Heart left ventricle (tissue), 16 donors: ENCODE measurements at regions of chr16 and their contacts with region 1.

Region 1: GRCh38 chr16:82263521-82264143 is 93.6 kb upstream of the MPHOSPH6 start:
- DNase-seq: peak in 4 of 5 donors; percentile 43 to 53 (median 48)
- ATAC-seq: peak; percentile 79 to 92 (median 88)
- H3K4me3 ChIP-seq: no peak overlapping the region
- H3K27ac ChIP-seq: no peak overlapping the region
- H3K4me1 ChIP-seq: peaks cover 0 to 13% (median 0%) of the 10 kb centered on the region in 12 donors
- H3K27me3 ChIP-seq: no peaks in the 10 kb centered on the region
- CTCF ChIP-seq: peak; percentile 81 to 96 (median 90)
- POLR2A ChIP-seq: no peak

Region 2: DNA sequence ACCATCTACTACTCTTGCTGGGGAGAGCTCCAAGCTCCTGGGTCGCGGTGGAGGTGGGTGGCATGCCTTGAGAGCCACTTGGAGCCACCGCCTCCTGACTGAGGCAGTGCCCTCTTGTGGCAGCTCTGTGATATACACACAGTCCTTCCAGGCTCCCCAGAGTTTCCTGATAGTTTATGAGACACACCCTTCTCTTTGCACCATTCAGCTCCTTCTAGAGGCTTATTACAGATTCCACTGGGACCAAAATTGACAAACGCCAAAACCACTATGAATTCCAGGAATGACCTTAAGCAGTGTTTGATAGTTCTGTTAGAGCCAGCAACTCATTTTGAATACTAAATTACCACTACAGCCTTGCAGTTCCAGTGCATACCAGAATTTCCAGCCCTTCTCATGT is 193.1 kb after region 1 on chr16:
- intact Hi-C with region 1: loop called (anchors 2 to 10 kb)
- DNase-seq: peak in 3 of 5 donors; percentile 10 to 42 (median 37)
- ATAC-seq: peak in 3 of 4 donors; percentile 63 to 81 (median 80)
- H3K4me3 ChIP-seq: no peak overlapping the region
- H3K27ac ChIP-seq: no peak overlapping the region
- H3K4me1 ChIP-seq: no peaks in the 10 kb centered on the region
- H3K27me3 ChIP-seq: peaks cover 0 to 5% (median 0%) of the 10 kb centered on the region in 9 donors
- CTCF ChIP-seq: peak; percentile 44 to 78 (median 67)
- POLR2A ChIP-seq: no peak

Region 3: GRCh38 chr16:83068686-83069085 is 805.1 kb after region 1 on chr16:
- intact Hi-C with region 1: loop called in 2 of 10 experiments (anchors 5 to 10 kb)
- DNase-seq: no peak
- ATAC-seq: peak in 1 of 4 donors; percentile 13
- H3K4me3 ChIP-seq: no peak overlapping the region
- H3K27ac ChIP-seq: no peak overlapping the region
- H3K4me1 ChIP-seq: peaks cover 0 to 8% (median 0%) of the 10 kb centered on the region in 12 donors
- H3K27me3 ChIP-seq: no peaks in the 10 kb centered on the region
- CTCF ChIP-seq: peak in 9 of 12 donors; percentile 18 to 60 (median 22)
- POLR2A ChIP-seq: no peak

Region 4: DNA sequence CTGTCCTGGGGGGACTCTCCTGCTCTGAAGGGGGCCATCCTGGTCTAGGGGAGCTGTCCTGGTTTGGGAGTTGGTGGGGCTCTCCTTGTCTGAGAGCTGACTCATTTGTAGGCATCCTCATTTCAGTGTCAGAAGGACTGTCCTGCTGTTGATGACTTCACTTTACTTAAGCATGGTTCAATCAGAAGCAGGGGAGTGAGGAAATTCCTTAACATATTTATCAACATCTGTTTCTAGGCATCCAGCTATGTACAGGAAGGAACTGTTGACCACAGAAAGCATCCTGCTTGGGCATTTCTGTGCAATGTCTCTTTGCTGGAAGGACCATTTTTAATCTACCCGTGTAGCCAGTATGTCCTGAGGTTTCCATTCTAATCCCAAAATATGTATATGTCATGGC is 1041.5 kb after region 1 on chr16:
- intact Hi-C with region 1: loop called in 1 of 10 experiments (anchors 5 kb)
- DNase-seq: no peak
- ATAC-seq: no peak
- H3K4me3 ChIP-seq: no peak overlapping the region
- H3K27ac ChIP-seq: no peak overlapping the region
- H3K4me1 ChIP-seq: peaks cover 0 to 4% (median 0%) of the 10 kb centered on the region in 12 donors
- H3K27me3 ChIP-seq: no peaks in the 10 kb centered on the region
- CTCF ChIP-seq: no peak
- POLR2A ChIP-seq: no peak

Region 5: GRCh38 chr16:83449861-83450260 is 1186.2 kb after region 1 on chr16:
- intact Hi-C with region 1: loop called in 6 of 10 experiments (anchors 5 to 10 kb)
- DNase-seq: no peak
- ATAC-seq: no peak
- H3K4me3 ChIP-seq: no peak overlapping the region
- H3K27ac ChIP-seq: no peak overlapping the region
- H3K4me1 ChIP-seq: no peaks in the 10 kb centered on the region
- H3K27me3 ChIP-seq: no peaks in the 10 kb centered on the region
- CTCF ChIP-seq: no peak
- POLR2A ChIP-seq: no peak